MCF 10A (cell line): ENCODE measurements at regions of chr4 and their contacts with region 1.

Region 1: DNA sequence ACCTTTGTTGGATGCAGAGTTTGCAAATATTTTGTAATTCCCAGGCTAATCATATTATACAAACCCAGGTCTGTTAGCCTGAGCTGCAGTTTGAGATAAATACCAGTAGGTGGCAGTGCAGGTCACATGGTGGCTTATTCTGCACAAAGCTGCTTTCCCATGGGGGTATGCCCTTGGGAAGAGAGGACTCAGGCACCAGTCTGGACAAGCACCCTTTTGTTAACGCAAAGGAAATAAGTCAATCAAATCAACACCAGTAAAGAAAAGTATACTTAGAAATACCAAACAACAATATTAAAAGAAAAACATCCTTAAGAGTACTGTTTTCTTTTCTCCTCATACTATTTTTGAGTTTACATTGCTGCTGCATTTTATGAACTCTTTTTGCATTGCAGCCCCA is 389.0 kb upstream of the ZFP42 start:
- DNase-seq: peak; percentile 71
- H3K4me3 Mint-ChIP-seq: no peak overlapping the region
- H3K27ac Mint-ChIP-seq: no peak overlapping the region
- H3K4me1 Mint-ChIP-seq: peaks cover 25% of the 10 kb centered on the region
- H3K27me3 Mint-ChIP-seq: no peaks in the 10 kb centered on the region
- CTCF ChIP-seq: peak; percentile 90

Region 2: DNA sequence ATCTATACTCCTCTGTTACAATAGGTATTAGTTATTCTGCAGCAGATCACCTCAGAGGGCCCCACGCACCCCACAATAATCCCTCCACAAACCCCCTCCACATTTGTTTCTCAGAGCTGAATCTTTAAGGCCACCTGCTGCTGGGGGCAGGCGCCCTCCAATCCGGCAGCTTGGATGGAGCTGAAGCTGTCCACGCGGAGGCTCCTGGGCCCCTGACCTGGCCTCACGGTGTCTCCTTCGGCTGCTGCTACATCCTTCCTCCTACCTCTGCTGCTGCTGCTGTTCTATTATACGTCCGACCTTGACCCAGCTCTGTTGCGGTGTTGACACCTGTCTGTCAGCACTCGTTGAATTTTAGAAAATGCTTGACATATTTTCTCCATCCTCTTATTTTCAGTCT is 41.2 kb before region 1 on chr4:
- CTCF ChIA-PET with region 1: no interaction called
- POLR2A ChIA-PET with region 1: no interaction called
- intact Hi-C with region 1: no loop called
- DNase-seq: no peak
- H3K4me3 Mint-ChIP-seq: no peak overlapping the region
- H3K27ac Mint-ChIP-seq: no peak overlapping the region
- H3K4me1 Mint-ChIP-seq: no peaks in the 10 kb centered on the region
- H3K27me3 Mint-ChIP-seq: no peaks in the 10 kb centered on the region
- CTCF ChIP-seq: no peak

Region 3: DNA sequence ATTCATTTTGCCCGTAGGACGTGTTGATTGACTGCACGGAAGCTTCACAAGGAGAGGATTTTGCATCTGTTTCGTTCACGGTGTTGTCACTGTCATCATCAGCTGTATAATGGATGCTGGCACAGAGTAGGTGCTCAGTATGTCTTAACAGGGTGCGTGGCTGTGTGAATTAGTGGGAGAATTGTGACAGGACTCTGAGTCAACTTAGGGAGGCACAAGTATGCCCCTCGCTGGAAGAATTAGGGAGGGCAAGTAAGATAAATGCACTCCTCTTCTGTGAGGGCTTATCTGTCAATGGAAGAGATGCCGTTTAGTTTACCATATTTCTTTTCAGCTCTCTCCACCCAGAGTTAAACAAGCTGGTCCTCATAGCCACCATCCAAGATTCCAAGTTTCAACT is 639.9 kb after region 1 on chr4:
- CTCF ChIA-PET with region 1: no interaction called
- POLR2A ChIA-PET with region 1: no interaction called
- intact Hi-C with region 1: loop called (anchors 2 kb)
- DNase-seq: peak; percentile 31
- H3K4me3 Mint-ChIP-seq: no peak overlapping the region
- H3K27ac Mint-ChIP-seq: no peak overlapping the region
- H3K4me1 Mint-ChIP-seq: no peaks in the 10 kb centered on the region
- H3K27me3 Mint-ChIP-seq: no peaks in the 10 kb centered on the region
- CTCF ChIP-seq: no peak

Region 4: GRCh38 chr4:188627892-188628291 is 1021.3 kb after region 1 on chr4:
- CTCF ChIA-PET with region 1: interaction called, 4 read pairs
- POLR2A ChIA-PET with region 1: no interaction called
- intact Hi-C with region 1: loop called (anchors 5 kb)
- DNase-seq: no peak
- H3K4me3 Mint-ChIP-seq: no peak overlapping the region
- H3K27ac Mint-ChIP-seq: no peak overlapping the region
- H3K4me1 Mint-ChIP-seq: no peaks in the 10 kb centered on the region
- H3K27me3 Mint-ChIP-seq: no peaks in the 10 kb centered on the region
- CTCF ChIP-seq: no peak